Breast epithelium (tissue), 4 donors: ENCODE measurements at regions of chr19 and their contacts with region 1.

Region 1: DNA sequence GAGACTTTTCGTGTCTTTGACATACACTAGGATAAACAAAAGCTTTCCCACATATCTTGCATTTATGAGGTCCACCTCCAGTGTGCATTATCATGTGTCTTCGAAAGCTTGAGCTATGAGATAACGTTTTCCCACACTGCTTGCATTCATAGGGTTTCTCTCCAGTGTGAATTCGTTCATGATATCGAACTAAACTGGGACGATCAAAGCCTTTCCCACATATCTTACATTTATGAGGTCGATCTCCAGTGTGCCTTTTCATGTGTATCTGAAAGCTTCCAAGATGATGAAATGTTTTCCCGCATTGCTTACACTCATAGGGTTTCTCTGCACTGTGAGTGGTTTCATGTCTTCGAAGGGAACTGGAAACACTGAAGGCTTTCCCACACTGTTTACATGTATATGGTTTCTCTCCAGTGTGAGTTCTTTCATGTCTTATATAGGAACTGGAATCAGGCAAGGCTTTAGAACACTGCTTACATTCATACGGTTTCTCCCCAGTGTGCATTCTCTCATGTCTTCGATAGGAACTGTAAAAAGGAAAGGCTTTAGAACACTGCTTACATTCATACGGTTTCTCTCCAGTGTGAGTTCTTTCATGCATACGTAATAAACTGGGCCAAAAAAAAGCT is 14.5 kb downstream of the ZNF563 start:
- DNase-seq: no peak
- H3K4me3 ChIP-seq: no peak overlapping the region
- H3K27ac ChIP-seq: no peak overlapping the region
- H3K4me1 ChIP-seq: no peaks in the 10 kb centered on the region
- H3K27me3 ChIP-seq: no peaks in the 10 kb centered on the region
- CTCF ChIP-seq: no peak
- POLR2A ChIP-seq: no peak

Region 2: DNA sequence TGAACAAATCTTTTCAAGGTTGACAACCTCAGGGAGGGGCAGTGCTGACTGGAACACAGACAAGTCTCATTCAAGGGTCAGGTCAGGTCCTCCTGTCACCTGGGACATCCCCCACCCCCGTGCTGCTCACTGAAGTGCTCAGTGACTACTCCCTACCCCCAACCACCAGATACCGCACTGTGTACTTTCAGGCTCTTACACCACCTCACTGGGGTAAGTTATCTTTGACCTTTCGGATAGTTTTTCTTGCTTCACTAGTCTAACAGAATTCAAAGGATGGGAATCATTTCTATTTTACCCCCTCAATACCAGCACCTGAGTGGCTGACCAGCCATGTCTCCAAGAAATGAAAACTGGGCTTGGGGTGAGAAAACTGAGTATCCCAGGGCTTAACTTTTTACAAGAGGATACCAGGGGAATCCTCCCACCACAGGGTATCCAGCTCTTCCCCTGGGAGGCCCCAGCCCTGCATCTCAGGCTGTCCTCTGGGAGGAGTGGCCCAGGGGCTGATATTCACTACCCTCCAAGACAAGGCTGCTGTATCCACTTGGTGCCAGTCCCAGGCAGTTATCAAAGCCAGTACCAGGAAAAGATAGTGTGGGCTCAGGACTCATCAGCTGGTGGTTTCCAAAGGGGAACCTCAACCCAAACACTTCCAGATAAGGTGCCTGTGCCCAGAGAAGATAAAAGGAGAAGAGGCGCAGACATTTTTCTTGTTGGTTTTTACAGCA is 12.5 kb after region 1 on chr19:
- intact Hi-C with region 1: loop called (anchors 1 kb)
- DNase-seq: no peak
- H3K4me3 ChIP-seq: no peak overlapping the region
- H3K27ac ChIP-seq: no peak overlapping the region
- H3K4me1 ChIP-seq: no peaks in the 10 kb centered on the region
- H3K27me3 ChIP-seq: no peaks in the 10 kb centered on the region
- CTCF ChIP-seq: no peak
- POLR2A ChIP-seq: no peak